ENCODE measurements at regions of chr3 and their contacts with region 1.

Region 1: GRCh38 chr3:15629860-15630597 is 28.5 kb downstream of the BTD start:
- H3K4me3 ChIP-seq: peak overlapping the region; percentile 10; the same call in 1 of the 2 replicates
- H3K27ac ChIP-seq: no peak overlapping the region
- H3K4me1 ChIP-seq: peaks cover 36% of the 10 kb centered on the region
- CTCF ChIP-seq: peak; percentile 64

Region 2: GRCh38 chr3:15797642-15798303 is 167.7 kb after region 1 on chr3 and contains the start of gene ANKRD28:
- CTCF ChIA-PET with region 1: interaction called, 16 read pairs
- POLR2A ChIA-PET with region 1: no interaction called
- H3K4me3 ChIP-seq: peak within 1 kb of the TSS; percentile 0
- H3K27ac ChIP-seq: peak within 1 kb of the TSS; percentile 35
- H3K4me1 ChIP-seq: peaks cover 35% of the 10 kb centered on the region
- CTCF ChIP-seq: no peak

Region 3: GRCh38 chr3:15812183-15812582 is 182.2 kb after region 1 on chr3:
- CTCF ChIA-PET with region 1: interaction called, 22 read pairs
- POLR2A ChIA-PET with region 1: no interaction called
- H3K4me3 ChIP-seq: no peak overlapping the region
- H3K27ac ChIP-seq: no peak overlapping the region
- H3K4me1 ChIP-seq: 0 out of 2 replicates have a peak, but pooled peaks cover 5% of the 10 kb centered on the region
- CTCF ChIP-seq: 0 out of 2 replicates have a peak, but pooled peaks have one; percentile 14